Activated T-helper 1 cell treated with anti-CD3 and anti-CD28 coated beads, Interleukin-12 subunit alpha, Interleukin-12 subunit beta, Interleukin-2, Interleukin-4 antibody, amounts not matched to agents 30 ng/mL and 10 ng/mL and 1 ng/mL, durations not matched to agents 14 hours and 24 hours and 36 hours (primary cell): ENCODE measurements at regions of chr16 and their contacts with region 1.

Region 1: DNA sequence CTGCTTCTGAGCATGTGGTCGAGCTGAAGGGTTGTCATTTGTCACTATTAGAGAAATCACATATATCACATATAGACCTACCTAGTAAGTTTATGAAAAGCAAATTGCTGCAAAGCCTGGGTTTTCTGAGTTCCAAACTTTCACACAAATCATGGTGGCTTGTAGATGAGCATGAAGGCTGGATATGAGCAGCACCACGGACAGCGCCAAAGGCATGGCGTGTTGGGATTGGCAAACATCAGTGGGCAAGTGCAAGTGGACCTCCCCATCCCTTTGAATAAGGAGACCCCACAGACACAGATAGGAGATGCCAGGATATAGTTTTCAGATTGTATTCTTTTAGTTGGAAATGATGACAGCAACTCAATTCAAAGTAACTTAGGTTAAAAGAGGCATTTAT is 77.6 kb upstream of the CACNG3 start:
- DNase-seq: no peak
- H3K4me3 Mint-ChIP-seq: no peak overlapping the region
- H3K27ac Mint-ChIP-seq: no peak overlapping the region
- H3K4me1 Mint-ChIP-seq: no peaks in the 10 kb centered on the region
- H3K27me3 Mint-ChIP-seq: no peaks in the 10 kb centered on the region

Region 2: DNA sequence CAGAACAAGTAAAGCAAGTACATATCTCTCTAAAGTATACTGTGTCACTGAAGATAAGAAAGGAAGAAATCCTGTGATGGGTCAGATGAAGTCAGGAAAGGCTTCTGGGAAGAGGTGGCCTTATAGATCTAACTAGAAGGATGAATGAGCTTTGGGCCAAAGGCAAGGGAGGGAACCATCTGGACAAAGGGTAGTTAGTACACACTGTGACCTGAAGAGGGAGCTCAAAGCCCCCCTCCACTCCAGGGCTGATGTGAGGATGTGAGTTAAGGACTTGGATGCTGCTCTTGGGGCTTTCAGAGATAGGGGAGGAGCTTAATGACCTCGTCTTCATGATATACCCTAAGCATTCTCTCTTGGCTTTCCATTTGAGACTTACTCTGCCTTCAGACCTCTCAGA is 107.6 kb before region 1 on chr16:
- intact Hi-C with region 1: loop called (anchors 10 kb)
- DNase-seq: peak; percentile 6
- H3K4me3 Mint-ChIP-seq: no peak overlapping the region
- H3K27ac Mint-ChIP-seq: no peak overlapping the region
- H3K4me1 Mint-ChIP-seq: peaks cover 20% of the 10 kb centered on the region
- H3K27me3 Mint-ChIP-seq: no peaks in the 10 kb centered on the region